Panc1 (cell line): ENCODE measurements at regions of chr5 and their contacts with region 1.

Region 1: GRCh38 chr5:106277540-106278096 is 1393.1 kb downstream of the EFNA5 start:
- DNase-seq: no peak
- ATAC-seq: no peak
- H3K4me3 ChIP-seq: no peak overlapping the region
- H3K27ac ChIP-seq: no peak overlapping the region
- H3K4me1 ChIP-seq: no peaks in the 10 kb centered on the region
- H3K27me3 ChIP-seq: no peaks in the 10 kb centered on the region
- CTCF ChIP-seq: no peak

Region 2: DNA sequence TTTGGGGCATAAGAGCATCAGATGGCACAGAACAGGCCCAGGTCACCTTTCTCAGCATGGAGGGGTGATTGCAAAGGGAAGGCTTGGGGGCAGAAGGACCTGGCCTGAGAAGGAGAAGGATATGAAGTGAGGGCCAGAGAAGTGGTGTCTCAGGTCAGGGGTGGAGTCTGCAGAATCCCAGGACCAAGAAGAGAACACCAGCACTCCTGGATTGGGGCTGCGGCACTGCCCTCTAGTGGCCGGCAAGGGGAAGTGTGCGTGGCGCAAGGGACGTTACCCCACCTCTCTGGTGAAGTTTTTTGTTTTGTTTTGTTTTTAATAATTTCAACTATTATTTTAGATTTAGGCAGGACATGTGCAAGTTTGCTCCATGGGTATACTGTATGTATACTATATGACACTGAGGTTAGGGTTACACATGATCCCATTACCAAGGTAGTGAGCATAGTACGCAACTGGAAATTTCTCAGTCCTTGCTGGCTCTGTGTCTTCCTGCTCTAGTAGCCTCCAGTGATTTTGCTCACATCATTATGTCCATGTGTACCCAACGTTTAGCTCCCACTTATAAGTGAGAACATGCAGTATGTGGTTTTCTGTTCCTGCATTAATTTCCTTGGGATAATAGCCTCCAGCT is 155.5 kb before region 1 on chr5:
- CTCF ChIA-PET with region 1: no interaction called
- POLR2A ChIA-PET with region 1: interaction called, 15 read pairs
- in situ Hi-C with region 1: no loop called
- intact Hi-C with region 1: no loop called
- DNase-seq: peak; percentile 25
- ATAC-seq: no peak
- H3K4me3 ChIP-seq: no peak overlapping the region
- H3K27ac ChIP-seq: no peak overlapping the region
- H3K4me1 ChIP-seq: no peaks in the 10 kb centered on the region
- H3K27me3 ChIP-seq: no peaks in the 10 kb centered on the region
- CTCF ChIP-seq: peak; percentile 83